IMR-90 (cell line): ENCODE measurements at regions of chr13 and their contacts with region 1.

Region 1: DNA sequence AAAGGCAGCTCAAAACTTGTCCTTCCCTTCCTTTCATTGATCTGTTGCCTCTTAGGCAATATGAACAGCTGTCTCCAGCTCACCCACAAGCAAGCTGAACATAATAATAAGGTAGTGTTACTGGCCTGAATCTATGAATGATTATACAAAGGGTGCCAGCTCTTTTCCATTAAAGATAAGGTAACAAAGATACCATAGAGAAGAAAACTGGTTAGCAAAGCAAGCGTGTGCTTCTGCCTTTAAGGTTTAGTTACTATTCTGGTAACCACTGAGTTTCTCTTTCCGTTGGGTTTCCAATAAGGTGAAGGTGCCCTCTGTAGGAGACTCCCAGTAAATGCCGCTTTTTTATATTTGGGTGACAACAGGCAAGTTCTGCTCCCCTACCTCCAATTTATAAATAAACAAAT is 12.1 kb upstream of the DACH1 start:
- DNase-seq: peak; percentile 27
- ATAC-seq: peak; percentile 78
- H3K4me3 ChIP-seq: no peak overlapping the region
- H3K27ac ChIP-seq: no peak overlapping the region
- H3K4me1 ChIP-seq: no peaks in the 10 kb centered on the region
- H3K27me3 ChIP-seq: no peaks in the 10 kb centered on the region
- CTCF ChIP-seq: peak; percentile 55
- POLR2A ChIP-seq: no peak
- RAD21 ChIP-seq: peak; percentile 51

Region 2: DNA sequence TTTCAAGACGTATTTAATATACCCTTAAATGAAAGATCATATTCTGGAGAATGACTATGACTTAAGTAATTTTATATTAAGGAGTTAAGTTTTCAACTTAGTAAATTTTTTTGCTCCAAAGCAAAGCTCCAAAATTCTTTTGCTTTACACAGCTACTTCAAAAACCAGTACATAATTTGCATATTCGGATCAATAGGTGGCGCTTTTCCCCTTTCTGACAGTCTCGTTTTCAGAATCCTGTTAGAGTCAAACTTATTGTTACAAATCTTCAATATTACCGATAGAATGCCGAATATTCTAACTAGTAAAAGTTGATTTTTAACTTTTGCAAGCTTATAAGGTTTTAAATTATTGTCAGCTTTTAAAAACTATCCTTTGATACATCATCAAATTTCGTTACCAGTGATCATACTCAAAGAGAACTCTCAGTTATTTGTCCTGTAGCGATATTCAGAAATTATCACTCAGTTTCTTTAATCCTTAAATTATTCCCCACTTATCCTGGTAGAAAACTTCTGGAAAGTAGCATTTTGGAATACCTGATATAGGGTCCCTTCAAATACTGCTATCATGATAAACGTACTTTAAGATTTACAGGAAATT is 918.2 kb before region 1 on chr13:
- CTCF ChIA-PET with region 1: interaction called, 3 read pairs
- POLR2A ChIA-PET with region 1: no interaction called
- dilution Hi-C with region 1: no loop called
- in situ Hi-C with region 1: no loop called
- intact Hi-C with region 1: loop called (anchors 1 kb)
- DNase-seq: peak; percentile 13
- ATAC-seq: no peak
- H3K4me3 ChIP-seq: no peak overlapping the region
- H3K27ac ChIP-seq: no peak overlapping the region
- H3K4me1 ChIP-seq: no peaks in the 10 kb centered on the region
- H3K27me3 ChIP-seq: no peaks in the 10 kb centered on the region
- CTCF ChIP-seq: peak; percentile 51
- POLR2A ChIP-seq: no peak
- RAD21 ChIP-seq: peak; percentile 48

Region 3: DNA sequence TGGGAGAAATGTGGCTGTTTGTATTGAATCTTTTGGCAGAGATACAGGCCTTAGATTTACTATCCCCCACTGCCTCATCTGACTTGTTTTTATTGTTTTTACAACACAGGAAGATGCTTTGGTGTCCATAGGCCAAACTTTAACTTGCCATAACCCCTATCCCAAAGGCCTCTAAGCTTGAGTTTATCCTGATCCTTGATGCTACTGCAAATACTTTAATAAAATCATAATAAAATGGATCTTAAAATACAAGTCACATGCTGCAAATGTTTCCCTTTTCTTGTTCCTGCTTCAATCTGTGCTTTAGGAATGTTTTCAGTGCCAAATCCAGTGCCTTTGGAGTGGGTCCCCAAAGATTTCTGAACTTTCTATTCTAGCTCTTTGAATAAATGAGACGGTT is 782.7 kb before region 1 on chr13:
- CTCF ChIA-PET with region 1: no interaction called
- POLR2A ChIA-PET with region 1: no interaction called
- dilution Hi-C with region 1: no loop called
- in situ Hi-C with region 1: no loop called
- intact Hi-C with region 1: loop called (anchors 5 kb)
- DNase-seq: no peak
- ATAC-seq: no peak
- H3K4me3 ChIP-seq: no peak overlapping the region
- H3K27ac ChIP-seq: no peak overlapping the region
- H3K4me1 ChIP-seq: no peaks in the 10 kb centered on the region
- H3K27me3 ChIP-seq: no peaks in the 10 kb centered on the region
- CTCF ChIP-seq: no peak
- POLR2A ChIP-seq: no peak
- RAD21 ChIP-seq: no peak

Region 4: GRCh38 chr13:71240911-71241310 is 638.2 kb before region 1 on chr13:
- CTCF ChIA-PET with region 1: no interaction called
- POLR2A ChIA-PET with region 1: no interaction called
- dilution Hi-C with region 1: no loop called
- in situ Hi-C with region 1: no loop called
- intact Hi-C with region 1: loop called (anchors 2 kb)
- DNase-seq: no peak
- ATAC-seq: 0 out of 2 replicates have a peak, but pooled peaks have one; percentile 40
- H3K4me3 ChIP-seq: no peak overlapping the region
- H3K27ac ChIP-seq: no peak overlapping the region
- H3K4me1 ChIP-seq: no peaks in the 10 kb centered on the region
- H3K27me3 ChIP-seq: no peaks in the 10 kb centered on the region
- CTCF ChIP-seq: 0 out of 2 replicates have a peak, but pooled peaks have one; percentile 19
- POLR2A ChIP-seq: no peak
- RAD21 ChIP-seq: no peak

Region 5: GRCh38 chr13:71320452-71320851 is 558.7 kb before region 1 on chr13:
- CTCF ChIA-PET with region 1: interaction called, 14 read pairs
- POLR2A ChIA-PET with region 1: no interaction called
- dilution Hi-C with region 1: no loop called
- in situ Hi-C with region 1: loop called (anchors 10 kb)
- intact Hi-C with region 1: loop called (anchors 1 kb)
- DNase-seq: peak; percentile 41
- ATAC-seq: peak; percentile 60; the same call in 1 of the 2 replicates
- H3K4me3 ChIP-seq: no peak overlapping the region
- H3K27ac ChIP-seq: no peak overlapping the region
- H3K4me1 ChIP-seq: no peaks in the 10 kb centered on the region
- H3K27me3 ChIP-seq: no peaks in the 10 kb centered on the region
- CTCF ChIP-seq: peak; percentile 60
- POLR2A ChIP-seq: no peak
- RAD21 ChIP-seq: peak; percentile 61